ENCODE measurements at regions of chr4 and their contacts with region 1.

Region 1: GRCh38 chr4:10123227-10124101 is 6.9 kb upstream of the WDR1 start:
- DNase-seq: peak; percentile 94
- H3K4me3 ChIP-seq: no peak overlapping the region
- H3K27ac ChIP-seq: peak overlapping the region; percentile 66
- H3K4me1 ChIP-seq: peaks cover 22% of the 10 kb centered on the region
- H3K27me3 ChIP-seq: no peaks in the 10 kb centered on the region
- CTCF ChIP-seq: no peak
- POLR2A ChIP-seq: no peak

Region 2: GRCh38 chr4:9979101-9979701 is 144.3 kb before region 1 on chr4:
- CTCF ChIA-PET with region 1: no interaction called
- POLR2A ChIA-PET with region 1: no interaction called
- dilution Hi-C with region 1: no loop called
- intact Hi-C with region 1: no loop called
- DNase-seq: no peak
- H3K4me3 ChIP-seq: no peak overlapping the region
- H3K27ac ChIP-seq: no peak overlapping the region
- H3K4me1 ChIP-seq: no peaks in the 10 kb centered on the region
- H3K27me3 ChIP-seq: no peaks in the 10 kb centered on the region
- CTCF ChIP-seq: no peak
- POLR2A ChIP-seq: no peak

Region 3: DNA sequence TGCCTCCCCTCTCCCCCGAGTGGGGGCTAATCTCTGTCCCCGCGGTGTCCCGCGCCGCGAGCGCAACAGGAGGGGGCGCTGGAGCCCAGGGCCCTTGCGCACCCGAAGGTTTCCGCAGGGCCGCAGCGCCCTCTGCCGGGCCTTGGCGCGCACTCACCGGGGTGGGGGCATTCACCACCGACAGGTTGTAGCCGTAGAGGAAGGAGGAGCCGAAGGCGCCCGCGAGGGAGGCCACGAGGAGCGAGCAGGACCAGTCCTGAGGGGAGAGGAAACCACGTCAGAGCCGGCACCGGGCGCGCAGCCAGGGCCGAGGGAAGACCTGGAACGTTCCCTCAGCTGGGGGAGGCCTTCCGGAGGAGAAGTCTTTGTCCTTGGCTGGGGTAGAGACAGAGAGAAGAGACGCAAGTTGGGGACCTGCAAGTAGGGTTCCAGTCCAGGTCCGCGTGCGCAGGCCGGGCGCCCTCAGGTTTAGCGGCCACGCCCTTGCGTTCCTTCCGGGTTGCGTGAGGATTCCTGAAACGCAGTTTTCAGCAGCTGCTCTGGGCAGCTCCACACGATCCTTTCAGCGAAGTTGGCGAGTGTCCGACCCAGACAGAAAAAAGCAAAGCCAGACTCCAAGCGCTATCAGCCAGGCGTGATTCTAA is 104.5 kb before region 1 on chr4:
- CTCF ChIA-PET with region 1: no interaction called
- POLR2A ChIA-PET with region 1: no interaction called
- dilution Hi-C with region 1: no loop called
- intact Hi-C with region 1: loop called (anchors 1 kb)
- DNase-seq: peak; percentile 95
- H3K4me3 ChIP-seq: peak overlapping the region in 2 of 3 experiments; percentile 25 to 27
- H3K27ac ChIP-seq: peak overlapping the region; percentile 50
- H3K4me1 ChIP-seq: peaks cover 6% of the 10 kb centered on the region
- H3K27me3 ChIP-seq: no peaks in the 10 kb centered on the region
- CTCF ChIP-seq: peak; percentile 100
- POLR2A ChIP-seq: peak; percentile 75

Measured in endothelial cell of umbilical vein (primary cell).